Lower leg skin (tissue), 4 donors: ENCODE measurements at regions of chr20 and their contacts with region 1.

Region 1: GRCh38 chr20:44909872-44910689 is at the start of gene PABPC1L:
- DNase-seq: peak; percentile 30 to 87
- H3K4me3 ChIP-seq: peak within 1 kb of the TSS; percentile 52
- CTCF ChIP-seq: no peak
- POLR2A ChIP-seq: no peak
- total RNA-seq, gene PABPC1L: 7.0 to 30.2 (median 9.6) TPM

Region 2: GRCh38 chr20:46363800-46364634 is 1453.9 kb after region 1 on chr20:
- intact Hi-C with region 1: loop called (anchors 5 kb)
- DNase-seq: peak; percentile 85 to 96
- H3K4me3 ChIP-seq: peak overlapping the region; percentile 97
- CTCF ChIP-seq: no peak
- POLR2A ChIP-seq: no peak